ENCODE measurements at regions of chr16 and their contacts with region 1.

Region 1: GRCh38 chr16:23729503-23730424 is 16.7 kb upstream of the ERN2 start:
- DNase-seq: no peak
- H3K4me3 ChIP-seq: no peak overlapping the region
- H3K27ac ChIP-seq: no peak overlapping the region
- H3K4me1 ChIP-seq: peaks cover 0 to 5% (median 2%) of the 10 kb centered on the region in 6 donors
- H3K27me3 ChIP-seq: peaks cover 0 to 16% (median 0%) of the 10 kb centered on the region in 7 donors
- CTCF ChIP-seq: no peak
- POLR2A ChIP-seq: no peak

Region 2: DNA sequence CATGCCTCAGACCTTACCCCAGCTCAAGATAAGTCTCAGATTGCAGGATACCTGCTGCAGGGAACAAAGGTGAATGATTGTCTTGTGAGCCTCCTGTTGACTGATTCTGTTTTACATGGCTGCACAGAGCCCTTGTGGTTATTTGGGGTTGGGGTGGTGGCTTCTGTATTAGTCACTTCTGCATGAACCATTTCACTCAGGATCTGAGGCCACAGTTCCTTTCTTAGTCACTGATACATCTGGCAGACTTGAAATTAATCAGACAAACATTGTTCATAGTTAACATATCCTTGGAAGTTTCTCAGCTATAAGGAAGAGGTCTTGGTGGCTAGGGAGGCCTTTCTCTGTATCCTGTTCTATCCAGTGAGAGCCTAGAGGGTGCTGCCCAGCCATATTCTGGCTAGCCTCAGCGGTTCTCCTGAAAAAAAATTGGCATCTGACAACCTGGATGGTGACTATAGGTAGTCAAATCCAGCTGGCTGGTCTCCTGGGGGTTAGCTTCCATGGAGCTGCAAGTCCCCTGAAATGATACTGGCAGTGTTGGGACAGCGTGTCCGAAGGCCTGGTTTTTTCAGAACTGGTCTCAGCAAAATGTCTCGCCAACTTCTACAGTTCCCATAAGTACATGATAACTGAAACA is 59.5 kb before region 1 on chr16:
- intact Hi-C with region 1: no loop called
- DNase-seq: no peak
- H3K4me3 ChIP-seq: no peak overlapping the region
- H3K27ac ChIP-seq: no peak overlapping the region
- H3K4me1 ChIP-seq: peaks cover 0 to 7% (median 2%) of the 10 kb centered on the region in 6 donors
- H3K27me3 ChIP-seq: no peaks in the 10 kb centered on the region
- CTCF ChIP-seq: no peak
- POLR2A ChIP-seq: no peak

Region 3: GRCh38 chr16:24163935-24164334 is 434.2 kb after region 1 on chr16:
- intact Hi-C with region 1: no loop called
- DNase-seq: no peak
- H3K4me3 ChIP-seq: no peak overlapping the region
- H3K27ac ChIP-seq: no peak overlapping the region
- H3K4me1 ChIP-seq: no peaks in the 10 kb centered on the region
- H3K27me3 ChIP-seq: no peaks in the 10 kb centered on the region
- CTCF ChIP-seq: no peak
- POLR2A ChIP-seq: no peak

Region 4: DNA sequence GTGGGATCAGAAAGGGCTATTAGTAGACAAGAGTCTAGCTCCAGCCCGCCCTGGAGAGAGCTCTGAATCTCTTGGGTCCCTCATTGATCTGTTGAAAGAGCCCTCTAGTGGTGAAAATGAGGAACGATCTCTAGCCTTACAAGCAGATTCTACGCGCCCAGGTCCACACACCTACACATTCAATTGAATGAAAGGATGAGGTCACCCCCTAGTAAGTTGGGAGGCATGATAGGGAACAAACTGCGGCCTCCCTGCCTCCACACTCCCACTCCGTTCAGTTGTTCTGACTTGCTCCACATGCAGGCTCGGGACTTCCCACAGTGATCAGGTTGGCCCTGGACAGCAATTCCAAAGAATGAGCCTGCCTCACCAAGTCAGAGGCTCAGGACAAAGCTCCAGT is 523.4 kb after region 1 on chr16:
- intact Hi-C with region 1: loop called (anchors 10 kb)
- DNase-seq: no peak
- H3K4me3 ChIP-seq: no peak overlapping the region
- H3K27ac ChIP-seq: no peak overlapping the region
- H3K4me1 ChIP-seq: peaks cover 0 to 3% (median 0%) of the 10 kb centered on the region in 6 donors
- H3K27me3 ChIP-seq: peaks cover 0 to 51% (median 32%) of the 10 kb centered on the region in 7 donors
- CTCF ChIP-seq: peak; percentile 11 to 79 (median 57)
- POLR2A ChIP-seq: no peak